ENCODE measurements at regions of chr7 and their contacts with region 1.

Region 1: GRCh38 chr7:22786290-22786932 is 36.2 kb downstream of the TOMM7 start:
- DNase-seq: peak; percentile 92 to 94
- H3K4me3 ChIP-seq: no peak overlapping the region
- H3K4me3 Mint-ChIP-seq: no peak overlapping the region
- H3K27ac Mint-ChIP-seq: peak overlapping the region; percentile 82
- H3K4me1 ChIP-seq: peaks cover 64% of the 10 kb centered on the region
- H3K4me1 Mint-ChIP-seq: peaks cover 41% of the 10 kb centered on the region
- H3K27me3 ChIP-seq: no peaks in the 10 kb centered on the region
- H3K27me3 Mint-ChIP-seq: no peaks in the 10 kb centered on the region
- CTCF ChIP-seq: no peak

Region 2: DNA sequence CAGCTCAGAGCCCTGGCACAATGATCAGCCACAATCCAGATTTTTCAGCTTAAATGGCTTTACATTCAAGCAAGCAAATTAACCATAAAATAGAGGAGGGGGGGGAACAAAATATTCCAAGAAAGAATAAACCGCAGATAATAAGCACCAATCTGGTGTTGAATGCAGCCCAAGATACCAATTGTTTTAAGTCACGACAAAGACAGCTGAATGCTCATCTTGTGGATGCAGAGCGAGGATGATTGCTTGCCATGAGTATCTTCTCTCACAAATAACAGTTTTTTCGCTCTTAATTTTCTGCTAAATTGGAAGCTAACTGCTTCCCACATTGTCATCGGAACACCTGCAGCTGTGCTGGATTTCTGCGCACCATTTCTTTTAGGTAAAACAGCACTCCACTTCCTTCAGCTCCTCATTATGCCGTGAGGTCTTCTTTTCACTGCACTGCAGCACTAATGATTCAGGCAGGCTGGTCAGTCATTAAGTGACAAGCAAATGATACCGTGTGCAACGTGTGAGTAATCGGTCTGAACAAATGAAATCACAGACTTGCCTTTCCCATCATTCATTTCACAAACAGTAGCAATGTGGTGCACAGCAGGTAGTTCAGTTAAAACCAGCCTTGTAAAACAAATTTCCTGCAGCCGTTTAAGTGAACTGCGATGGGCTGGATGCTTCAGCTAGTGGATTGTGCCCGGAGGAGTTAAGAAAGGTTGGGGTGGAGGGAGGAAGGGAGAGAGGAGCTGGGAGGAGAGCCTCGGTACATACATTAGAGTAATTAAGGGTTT is 734.3 kb before region 1 on chr7:
- CTCF ChIA-PET with region 1: no interaction called
- POLR2A ChIA-PET with region 1: no interaction called
- intact Hi-C with region 1: no loop called
- DNase-seq: no peak
- H3K4me3 ChIP-seq: no peak overlapping the region
- H3K4me3 Mint-ChIP-seq: no peak overlapping the region
- H3K27ac Mint-ChIP-seq: no peak overlapping the region
- H3K4me1 ChIP-seq: no peaks in the 10 kb centered on the region
- H3K4me1 Mint-ChIP-seq: no peaks in the 10 kb centered on the region
- H3K27me3 ChIP-seq: no peaks in the 10 kb centered on the region; the same call in 1 of the 2 replicates
- H3K27me3 Mint-ChIP-seq: peaks cover 45% of the 10 kb centered on the region
- CTCF ChIP-seq: no peak

Region 3: DNA sequence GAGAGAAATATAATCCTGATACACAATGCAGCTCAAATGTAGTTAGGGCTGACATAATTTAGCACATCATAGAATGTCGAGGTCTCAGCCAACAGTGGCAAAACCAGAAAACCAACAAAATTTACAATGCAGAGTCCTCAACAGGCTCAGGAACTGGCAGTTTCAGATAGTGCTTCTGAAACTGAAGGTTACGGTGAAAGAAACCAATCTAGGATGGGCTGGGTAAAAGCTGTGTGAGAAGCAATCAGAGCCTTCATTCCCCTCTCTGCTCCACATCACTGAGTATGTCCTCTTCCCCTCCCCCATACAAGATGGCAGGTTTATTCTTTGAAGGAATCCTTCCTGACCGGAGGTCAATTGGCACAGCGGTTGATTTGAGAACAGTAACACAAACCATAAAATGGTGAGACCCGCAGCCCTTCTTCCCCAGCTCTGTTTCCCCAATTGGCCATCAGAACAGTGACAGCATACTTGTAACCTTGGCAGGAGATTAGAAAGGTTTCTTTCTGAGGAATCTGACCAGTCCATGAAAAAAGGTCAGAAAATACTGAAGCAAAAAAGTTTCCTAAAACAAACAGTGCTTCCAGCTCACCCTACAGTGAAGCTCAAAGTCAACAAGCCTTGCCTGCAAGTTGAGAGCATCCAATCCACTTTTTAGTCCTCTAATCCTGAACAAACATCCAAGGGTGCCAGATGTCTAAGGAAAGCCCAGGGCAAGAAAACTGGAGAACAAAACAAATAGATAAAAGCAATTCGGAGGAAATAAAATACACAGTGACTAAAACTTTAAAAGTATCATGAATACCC is 113.4 kb before region 1 on chr7:
- CTCF ChIA-PET with region 1: interaction called, 3 read pairs
- POLR2A ChIA-PET with region 1: no interaction called
- intact Hi-C with region 1: loop called (anchors 1 kb)
- DNase-seq: peak; percentile 81 to 82
- H3K4me3 ChIP-seq: no peak overlapping the region
- H3K4me3 Mint-ChIP-seq: peak overlapping the region; percentile 39
- H3K27ac Mint-ChIP-seq: peak overlapping the region; percentile 78
- H3K4me1 ChIP-seq: peaks cover 57% of the 10 kb centered on the region
- H3K4me1 Mint-ChIP-seq: peaks cover 30% of the 10 kb centered on the region
- H3K27me3 ChIP-seq: no peaks in the 10 kb centered on the region
- H3K27me3 Mint-ChIP-seq: no peaks in the 10 kb centered on the region
- CTCF ChIP-seq: no peak

Region 4: GRCh38 chr7:22765609-22766008 is 20.8 kb before region 1 on chr7:
- CTCF ChIA-PET with region 1: no interaction called
- POLR2A ChIA-PET with region 1: no interaction called
- intact Hi-C with region 1: no loop called
- DNase-seq: no peak
- H3K4me3 ChIP-seq: no peak overlapping the region
- H3K4me3 Mint-ChIP-seq: no peak overlapping the region
- H3K27ac Mint-ChIP-seq: no peak overlapping the region
- H3K4me1 ChIP-seq: no peaks in the 10 kb centered on the region
- H3K4me1 Mint-ChIP-seq: peaks cover 8% of the 10 kb centered on the region
- H3K27me3 ChIP-seq: no peaks in the 10 kb centered on the region
- H3K27me3 Mint-ChIP-seq: no peaks in the 10 kb centered on the region
- CTCF ChIP-seq: no peak

Region 5: GRCh38 chr7:22806752-22807151 is 20.3 kb after region 1 on chr7:
- CTCF ChIA-PET with region 1: interaction called, 5 read pairs
- POLR2A ChIA-PET with region 1: no interaction called
- intact Hi-C with region 1: loop called (anchors 1 kb)
- DNase-seq: no peak
- H3K4me3 ChIP-seq: no peak overlapping the region
- H3K4me3 Mint-ChIP-seq: no peak overlapping the region
- H3K27ac Mint-ChIP-seq: peak overlapping the region; percentile 20
- H3K4me1 ChIP-seq: peaks cover 28% of the 10 kb centered on the region
- H3K4me1 Mint-ChIP-seq: peaks cover 32% of the 10 kb centered on the region
- H3K27me3 ChIP-seq: no peaks in the 10 kb centered on the region
- H3K27me3 Mint-ChIP-seq: no peaks in the 10 kb centered on the region
- CTCF ChIP-seq: no peak

Region 6: GRCh38 chr7:22854158-22855048 is 68.0 kb after region 1 on chr7:
- CTCF ChIA-PET with region 1: no interaction called
- POLR2A ChIA-PET with region 1: no interaction called
- intact Hi-C with region 1: loop called (anchors 5 kb)
- DNase-seq: peak; percentile 78
- H3K4me3 ChIP-seq: peak overlapping the region; percentile 57
- H3K4me3 Mint-ChIP-seq: peak overlapping the region; percentile 85
- H3K27ac Mint-ChIP-seq: peak overlapping the region; percentile 80
- H3K4me1 ChIP-seq: peaks cover 22% of the 10 kb centered on the region
- H3K4me1 Mint-ChIP-seq: peaks cover 21% of the 10 kb centered on the region
- H3K27me3 ChIP-seq: no peaks in the 10 kb centered on the region
- H3K27me3 Mint-ChIP-seq: no peaks in the 10 kb centered on the region
- CTCF ChIP-seq: peak in 1 of 2 experiments; percentile 80

Region 7: GRCh38 chr7:22896917-22897316 is 110.5 kb after region 1 on chr7:
- CTCF ChIA-PET with region 1: no interaction called
- POLR2A ChIA-PET with region 1: no interaction called
- intact Hi-C with region 1: no loop called
- DNase-seq: peak; percentile 38 to 66
- H3K4me3 ChIP-seq: no peak overlapping the region
- H3K4me3 Mint-ChIP-seq: no peak overlapping the region
- H3K27ac Mint-ChIP-seq: peak overlapping the region; percentile 11
- H3K4me1 ChIP-seq: peaks cover 9% of the 10 kb centered on the region; the same call in 1 of the 2 replicates
- H3K4me1 Mint-ChIP-seq: peaks cover 10% of the 10 kb centered on the region
- H3K27me3 ChIP-seq: no peaks in the 10 kb centered on the region
- H3K27me3 Mint-ChIP-seq: peaks cover 4% of the 10 kb centered on the region
- CTCF ChIP-seq: no peak

Region 8: DNA sequence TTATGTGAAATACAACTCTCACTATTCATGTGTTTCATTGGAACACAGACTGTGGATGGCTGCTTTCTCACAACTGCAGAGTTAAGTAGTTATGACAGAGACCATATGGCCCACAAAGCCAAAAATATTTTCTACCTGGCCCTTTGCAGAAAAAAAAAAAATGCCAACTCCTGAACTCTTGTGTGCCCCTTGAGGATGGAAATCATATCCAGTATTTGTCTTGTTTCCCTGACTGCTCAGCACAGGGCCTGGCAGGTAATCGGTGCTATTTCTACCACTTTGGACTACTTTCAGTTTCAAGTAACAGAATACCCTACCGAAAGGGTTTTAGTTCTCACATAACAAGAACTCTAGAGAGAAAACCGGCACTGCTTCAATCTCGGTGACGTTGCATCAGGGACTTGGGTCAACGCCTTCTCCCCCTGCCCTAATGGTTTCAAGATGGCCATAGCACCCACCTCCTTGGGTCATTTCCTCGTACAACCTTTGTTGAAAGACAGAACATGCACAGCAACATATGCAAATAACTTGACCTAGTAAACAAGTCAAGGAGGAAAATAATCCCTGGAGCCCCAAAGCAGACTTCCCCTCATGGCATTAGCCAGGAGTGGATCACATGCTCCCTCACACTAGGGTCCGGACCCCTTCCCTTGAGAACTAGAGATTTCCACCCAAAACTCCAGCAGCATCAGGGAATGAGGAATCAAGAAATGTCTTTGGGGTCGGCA is 448.3 kb after region 1 on chr7:
- CTCF ChIA-PET with region 1: no interaction called
- POLR2A ChIA-PET with region 1: no interaction called
- intact Hi-C with region 1: no loop called
- DNase-seq: no peak
- H3K4me3 ChIP-seq: no peak overlapping the region
- H3K4me3 Mint-ChIP-seq: no peak overlapping the region
- H3K27ac Mint-ChIP-seq: no peak overlapping the region
- H3K4me1 ChIP-seq: no peaks in the 10 kb centered on the region
- H3K4me1 Mint-ChIP-seq: no peaks in the 10 kb centered on the region
- H3K27me3 ChIP-seq: no peaks in the 10 kb centered on the region
- H3K27me3 Mint-ChIP-seq: peaks cover 2% of the 10 kb centered on the region
- CTCF ChIP-seq: no peak